Keratinocyte (primary cell): ENCODE measurements at regions of chr9 and their contacts with region 1.

Region 1: DNA sequence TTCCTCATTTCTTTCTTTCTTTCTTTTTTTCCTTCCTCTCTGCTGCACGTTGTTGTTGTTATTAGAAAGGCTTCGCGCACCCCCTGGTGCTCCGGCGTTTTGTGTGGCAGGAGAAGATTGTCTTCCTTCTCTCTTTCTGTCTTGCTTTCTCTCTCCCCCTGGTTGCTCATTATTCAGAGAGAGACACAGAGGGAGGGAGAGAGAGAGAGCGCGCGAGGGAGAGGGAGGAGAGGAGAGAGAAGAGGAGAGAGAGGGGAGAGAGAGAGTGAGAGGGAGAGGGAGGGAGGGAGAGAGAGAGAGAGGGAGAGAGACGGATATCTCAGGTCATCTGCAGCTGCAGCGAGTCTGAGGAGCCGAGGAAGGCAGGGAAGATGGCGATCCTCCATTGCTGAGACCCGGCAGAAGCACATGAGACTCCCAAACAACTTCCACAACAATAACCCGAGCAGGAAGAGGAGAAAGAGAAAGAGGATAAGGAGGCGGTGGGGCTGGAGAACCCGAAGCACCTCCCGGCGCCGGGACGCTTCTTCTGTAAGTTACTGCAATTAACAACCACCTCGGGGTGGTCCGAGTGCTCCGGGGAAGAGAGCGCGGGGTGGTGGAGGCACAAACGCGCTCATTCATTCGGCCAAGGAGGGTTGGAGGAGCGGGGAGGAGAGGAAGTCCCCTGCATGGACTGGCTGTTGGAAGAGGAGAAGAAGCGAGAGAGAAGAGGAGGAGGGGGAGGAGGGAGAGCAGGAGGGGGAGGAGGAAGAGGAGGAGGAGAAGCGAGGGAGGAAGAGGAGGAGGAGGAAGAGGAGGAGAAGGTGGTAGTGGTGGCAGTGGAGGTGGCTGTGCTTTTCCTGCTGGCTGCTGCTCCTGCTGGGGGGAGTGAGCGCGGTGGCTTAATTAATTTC is at the start of gene ZNF462:
- DNase-seq: no peak
- H3K4me3 ChIP-seq: peak within 1 kb of the TSS; percentile 86 to 92 (median 88)
- H3K27ac ChIP-seq: peak within 1 kb of the TSS; percentile 89
- H3K4me1 ChIP-seq: peaks cover 27% of the 10 kb centered on the region
- H3K27me3 ChIP-seq: no peaks in the 10 kb centered on the region
- CTCF ChIP-seq: peak; percentile 35 to 40 (median 37)
- polyA plus RNA-seq, gene ZNF462: 6.9 to 9.5 TPM (median 7.8 TPM) in 3 replicates

Region 2: GRCh38 chr9:106588626-106589025 is 274.4 kb before region 1 on chr9:
- dilution Hi-C with region 1: loop called (anchors 25 kb)
- DNase-seq: peak; percentile 70
- H3K4me3 ChIP-seq: no peak overlapping the region
- H3K27ac ChIP-seq: peak overlapping the region; percentile 85
- H3K4me1 ChIP-seq: peaks cover 48% of the 10 kb centered on the region
- H3K27me3 ChIP-seq: no peaks in the 10 kb centered on the region
- CTCF ChIP-seq: no peak

Region 3: DNA sequence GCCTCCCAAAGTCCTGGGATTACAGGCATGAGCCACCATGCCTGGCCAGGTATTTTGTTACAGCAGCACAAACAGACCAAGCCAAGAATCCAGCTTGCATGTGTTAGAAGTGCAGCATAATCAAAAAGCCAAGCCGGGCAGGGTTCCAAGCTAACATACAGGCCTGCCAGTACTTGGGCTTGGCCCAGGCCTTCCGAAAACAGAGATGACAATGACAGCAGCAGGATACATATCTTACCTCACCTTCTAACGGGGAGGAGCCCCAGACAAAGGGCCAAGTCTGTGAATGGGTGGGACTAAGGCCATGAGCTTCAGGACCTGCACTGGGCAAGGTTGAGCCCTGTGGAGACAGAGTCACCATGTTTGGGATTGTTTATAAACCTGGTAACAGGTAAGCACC is 91.4 kb before region 1 on chr9:
- dilution Hi-C with region 1: no loop called
- DNase-seq: no peak
- H3K4me3 ChIP-seq: no peak overlapping the region
- H3K27ac ChIP-seq: no peak overlapping the region
- H3K4me1 ChIP-seq: peaks cover 17% of the 10 kb centered on the region
- H3K27me3 ChIP-seq: no peaks in the 10 kb centered on the region
- CTCF ChIP-seq: no peak